ENCODE measurements at regions of chr16 and their contacts with region 1.

Region 1: GRCh38 chr16:67339453-67339852 is 12.8 kb downstream of the LRRC36 start:
- DNase-seq: no peak
- H3K4me3 Mint-ChIP-seq: no peak overlapping the region
- H3K27ac Mint-ChIP-seq: no peak overlapping the region
- H3K4me1 Mint-ChIP-seq: no peaks in the 10 kb centered on the region
- H3K27me3 Mint-ChIP-seq: peaks cover 11% of the 10 kb centered on the region

Region 2: GRCh38 chr16:67260426-67261075 is 78.9 kb before region 1 on chr16:
- CTCF ChIA-PET with region 1: interaction called, 13 read pairs
- intact Hi-C with region 1: no loop called
- DNase-seq: peak; percentile 51
- H3K4me3 Mint-ChIP-seq: no peak overlapping the region
- H3K27ac Mint-ChIP-seq: no peak overlapping the region
- H3K4me1 Mint-ChIP-seq: no peaks in the 10 kb centered on the region
- H3K27me3 Mint-ChIP-seq: peaks cover 26% of the 10 kb centered on the region